ENCODE measurements at regions of chr4 and their contacts with region 1.

Region 1: DNA sequence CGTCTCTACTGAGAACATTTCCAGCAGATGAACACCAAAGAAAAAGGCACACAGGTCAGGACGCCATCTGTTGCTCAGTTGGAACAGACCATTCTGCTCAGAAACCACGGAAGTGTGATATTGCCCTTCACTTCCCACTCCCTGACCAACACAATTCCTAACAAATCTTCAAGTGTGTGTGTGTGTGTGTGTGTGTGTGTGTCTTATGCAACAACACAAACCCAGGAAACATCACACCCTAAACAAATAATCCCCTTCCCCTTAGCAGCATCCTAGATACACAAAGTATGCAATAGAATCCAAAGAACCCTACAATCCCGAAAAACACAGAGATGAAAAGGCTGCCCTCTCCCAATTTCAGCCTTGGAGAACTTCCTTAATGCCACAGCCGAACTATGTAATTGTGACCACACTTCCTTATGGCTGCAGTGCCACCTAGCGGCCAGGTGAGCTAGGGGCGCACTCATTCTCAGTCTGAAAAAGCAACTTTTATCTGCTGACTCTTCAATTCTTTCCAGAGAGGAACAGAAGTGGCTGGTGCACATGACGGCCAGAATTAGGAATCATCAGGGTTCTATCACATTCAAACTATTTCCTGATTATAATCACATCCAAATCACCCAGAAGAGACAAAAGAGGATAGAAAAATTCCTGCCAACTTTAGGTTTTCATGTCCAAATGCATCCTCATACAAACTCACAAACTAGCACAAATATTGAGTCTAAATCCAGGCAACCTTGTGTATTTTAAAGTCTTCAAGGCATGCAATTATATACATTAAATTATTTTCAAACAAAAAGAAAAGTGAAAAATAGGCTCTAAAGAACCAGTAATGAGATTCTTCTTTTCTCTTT is 164.9 kb downstream of the DHX15 start:
- DNase-seq: peak; percentile 23 to 71 (median 53)
- ATAC-seq: no peak
- H3K4me3 ChIP-seq: no peak overlapping the region
- H3K4me3 Mint-ChIP-seq: no peak overlapping the region
- H3K27ac ChIP-seq: no peak overlapping the region
- H3K27ac Mint-ChIP-seq: no peak overlapping the region
- H3K4me1 ChIP-seq: no peaks in the 10 kb centered on the region
- H3K4me1 Mint-ChIP-seq: peaks cover 4% of the 10 kb centered on the region
- H3K27me3 ChIP-seq: no peaks in the 10 kb centered on the region
- H3K27me3 Mint-ChIP-seq: peaks cover 9% of the 10 kb centered on the region
- CTCF ChIP-seq: peak; percentile 82

Region 2: DNA sequence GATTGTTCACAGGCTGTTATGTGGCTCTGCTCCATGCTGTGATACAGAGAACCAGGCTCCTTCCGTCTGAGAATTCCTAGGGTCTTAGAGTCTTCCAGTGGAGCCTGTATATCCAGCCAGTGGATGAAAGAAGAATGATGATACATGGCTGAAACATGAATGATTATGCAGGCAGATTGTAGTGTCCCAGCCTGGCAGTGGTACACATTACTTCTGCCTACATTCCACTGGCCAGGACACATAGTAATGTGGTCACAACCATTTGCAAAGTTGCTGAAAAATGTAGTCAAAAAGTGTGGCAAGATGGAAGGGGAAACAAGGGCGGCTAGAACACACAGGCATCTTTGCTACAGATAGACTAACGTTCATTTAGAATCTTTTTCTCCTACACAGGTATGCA is 1731.2 kb before region 1 on chr4:
- CTCF ChIA-PET with region 1: no interaction called
- POLR2A ChIA-PET with region 1: no interaction called
- intact Hi-C with region 1: loop called in 1 of 2 experiments (anchors 5 kb)
- DNase-seq: no peak
- ATAC-seq: no peak
- H3K4me3 ChIP-seq: no peak overlapping the region
- H3K4me3 Mint-ChIP-seq: no peak overlapping the region
- H3K27ac ChIP-seq: no peak overlapping the region
- H3K27ac Mint-ChIP-seq: no peak overlapping the region
- H3K4me1 ChIP-seq: peaks cover 8% of the 10 kb centered on the region
- H3K4me1 Mint-ChIP-seq: peaks cover 17% of the 10 kb centered on the region
- H3K27me3 ChIP-seq: no peaks in the 10 kb centered on the region
- H3K27me3 Mint-ChIP-seq: no peaks in the 10 kb centered on the region
- CTCF ChIP-seq: no peak

Region 3: DNA sequence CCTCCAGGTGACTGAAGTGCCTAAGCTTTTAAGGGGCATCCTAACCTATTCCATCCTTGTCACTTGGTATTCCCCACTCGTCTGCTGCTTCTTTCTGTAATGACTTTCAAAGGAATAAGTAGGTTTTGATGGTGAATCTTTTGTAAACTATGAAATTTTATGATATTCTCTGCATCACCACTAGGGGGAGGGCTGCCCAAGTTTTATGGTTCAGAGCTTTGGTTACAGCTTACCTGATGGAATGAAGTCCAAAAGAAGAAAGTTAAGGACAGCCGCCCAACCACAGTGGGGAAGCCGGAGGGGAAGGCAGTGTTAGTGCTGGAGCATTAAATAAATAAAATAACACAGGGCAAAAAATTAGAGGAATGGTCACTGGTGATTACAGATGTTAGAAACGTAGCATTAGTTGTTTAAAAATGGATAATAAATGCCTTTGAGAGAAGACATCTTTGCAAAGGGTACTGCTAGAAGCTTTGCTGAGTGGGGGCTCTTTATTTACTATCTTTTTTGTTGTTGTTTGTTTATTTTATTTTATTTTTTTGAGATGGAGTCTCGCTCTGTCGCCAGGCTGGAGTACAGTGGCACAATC is 1521.8 kb before region 1 on chr4:
- CTCF ChIA-PET with region 1: interaction called, 10 read pairs
- POLR2A ChIA-PET with region 1: no interaction called
- intact Hi-C with region 1: loop called in 1 of 2 experiments (anchors 1 kb)
- DNase-seq: peak in 3 of 9 experiments; percentile 0 to 18 (median 5)
- ATAC-seq: no peak
- H3K4me3 ChIP-seq: no peak overlapping the region
- H3K4me3 Mint-ChIP-seq: no peak overlapping the region
- H3K27ac ChIP-seq: no peak overlapping the region
- H3K27ac Mint-ChIP-seq: no peak overlapping the region
- H3K4me1 ChIP-seq: no peaks in the 10 kb centered on the region
- H3K4me1 Mint-ChIP-seq: no peaks in the 10 kb centered on the region
- H3K27me3 ChIP-seq: no peaks in the 10 kb centered on the region
- H3K27me3 Mint-ChIP-seq: peaks cover 15% of the 10 kb centered on the region
- CTCF ChIP-seq: peak; percentile 71

Region 4: DNA sequence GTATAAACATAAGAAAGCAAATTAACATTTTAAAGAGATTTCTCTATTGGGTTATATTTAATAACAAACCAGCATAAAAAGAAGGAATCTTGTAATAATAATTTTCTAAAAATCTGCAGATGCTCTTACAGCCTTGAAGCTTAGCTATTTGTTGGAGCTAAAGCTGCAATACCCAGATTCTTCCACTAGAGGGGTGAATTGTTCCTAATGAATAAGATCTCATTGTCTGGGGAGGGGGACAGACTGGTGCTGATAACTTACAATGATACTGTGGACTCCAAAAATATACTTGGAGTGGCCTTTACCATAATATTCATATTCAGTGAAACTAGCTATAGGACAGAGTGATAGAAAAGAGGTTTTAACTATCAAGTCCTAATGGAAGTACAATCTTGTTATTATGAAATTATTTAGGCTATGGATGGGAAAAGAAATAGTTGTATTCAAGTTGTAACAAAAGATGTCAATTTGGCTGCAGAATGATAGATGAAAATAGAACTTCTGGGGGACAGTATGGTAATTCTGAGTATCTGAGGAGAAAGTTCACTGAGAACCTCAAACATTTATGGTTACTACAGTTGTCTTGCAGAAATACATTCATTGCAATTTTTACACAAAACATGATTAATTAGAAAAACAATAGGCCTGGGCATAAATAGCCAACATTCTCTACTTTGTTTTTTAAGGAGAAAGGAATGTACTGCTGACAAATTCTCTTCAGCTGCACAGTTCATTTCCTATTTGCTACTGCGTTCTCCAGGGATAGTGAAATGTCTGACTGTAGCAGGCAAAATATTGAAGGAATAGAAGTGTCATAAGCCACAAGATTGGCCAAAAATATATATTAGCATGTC is 1283.4 kb before region 1 on chr4:
- CTCF ChIA-PET with region 1: interaction called, 7 read pairs
- POLR2A ChIA-PET with region 1: no interaction called
- intact Hi-C with region 1: loop called in 1 of 2 experiments (anchors 2 kb)
- DNase-seq: peak in 2 of 9 experiments; percentile 7 to 22
- ATAC-seq: no peak
- H3K4me3 ChIP-seq: no peak overlapping the region
- H3K4me3 Mint-ChIP-seq: no peak overlapping the region
- H3K27ac ChIP-seq: no peak overlapping the region
- H3K27ac Mint-ChIP-seq: no peak overlapping the region
- H3K4me1 ChIP-seq: no peaks in the 10 kb centered on the region
- H3K4me1 Mint-ChIP-seq: no peaks in the 10 kb centered on the region
- H3K27me3 ChIP-seq: no peaks in the 10 kb centered on the region
- H3K27me3 Mint-ChIP-seq: no peaks in the 10 kb centered on the region
- CTCF ChIP-seq: peak; percentile 48

Region 5: DNA sequence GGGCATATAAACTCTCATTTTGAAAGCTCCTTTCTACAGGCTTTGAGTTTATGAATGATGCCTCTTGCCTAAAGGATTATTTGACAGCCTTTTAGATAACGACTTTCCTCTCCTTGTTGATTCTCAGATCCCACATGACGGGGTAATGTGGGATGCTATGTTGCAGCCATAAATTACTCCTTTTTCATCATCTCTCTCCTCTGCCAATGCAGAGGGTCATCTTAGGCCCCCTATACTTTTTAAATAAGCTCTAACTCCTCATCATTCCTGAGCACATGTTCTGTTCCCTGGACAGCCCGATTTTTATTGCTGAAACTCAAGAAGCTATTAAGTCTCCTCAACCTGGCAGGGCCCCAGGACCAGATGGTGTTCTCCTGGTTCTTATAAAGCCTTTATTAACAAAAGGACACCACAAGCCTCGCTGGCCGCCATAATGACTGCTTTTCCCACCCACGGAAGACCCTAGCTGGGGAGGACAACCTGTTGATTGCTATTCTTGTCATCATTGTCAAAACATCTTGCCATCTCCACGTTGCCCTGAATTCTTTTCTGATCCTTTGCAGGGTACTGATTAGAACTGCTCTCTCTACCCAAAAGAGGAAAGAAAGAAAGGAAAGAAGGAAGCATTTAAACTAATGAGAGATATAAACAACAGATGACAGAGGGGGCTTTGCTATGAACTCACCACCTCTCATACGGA is 14.3 kb after region 1 on chr4:
- CTCF ChIA-PET with region 1: interaction called, 19 read pairs
- POLR2A ChIA-PET with region 1: no interaction called
- intact Hi-C with region 1: no loop called
- DNase-seq: no peak
- ATAC-seq: no peak
- H3K4me3 ChIP-seq: no peak overlapping the region
- H3K4me3 Mint-ChIP-seq: no peak overlapping the region
- H3K27ac ChIP-seq: no peak overlapping the region
- H3K27ac Mint-ChIP-seq: no peak overlapping the region
- H3K4me1 ChIP-seq: no peaks in the 10 kb centered on the region
- H3K4me1 Mint-ChIP-seq: no peaks in the 10 kb centered on the region
- H3K27me3 ChIP-seq: no peaks in the 10 kb centered on the region
- H3K27me3 Mint-ChIP-seq: peaks cover 6% of the 10 kb centered on the region
- CTCF ChIP-seq: no peak

Region 6: GRCh38 chr4:24453951-24454350 is 34.5 kb after region 1 on chr4:
- CTCF ChIA-PET with region 1: no interaction called
- POLR2A ChIA-PET with region 1: no interaction called
- intact Hi-C with region 1: no loop called
- DNase-seq: no peak
- ATAC-seq: no peak
- H3K4me3 ChIP-seq: no peak overlapping the region
- H3K4me3 Mint-ChIP-seq: no peak overlapping the region
- H3K27ac ChIP-seq: no peak overlapping the region
- H3K27ac Mint-ChIP-seq: no peak overlapping the region
- H3K4me1 ChIP-seq: no peaks in the 10 kb centered on the region
- H3K4me1 Mint-ChIP-seq: no peaks in the 10 kb centered on the region
- H3K27me3 ChIP-seq: no peaks in the 10 kb centered on the region
- H3K27me3 Mint-ChIP-seq: peaks cover 37% of the 10 kb centered on the region
- CTCF ChIP-seq: no peak

Measured in CD8-positive, alpha-beta T cell (primary cell).